AG04450 (cell line): ENCODE measurements at regions of chr11 and their contacts with region 1.

Region 1: GRCh38 chr11:19071255-19071654 is 10.7 kb upstream of the MRGPRX2 start:
- DNase-seq: peak; percentile 53
- H3K4me3 ChIP-seq: peak overlapping the region; percentile 41
- H3K27ac ChIP-seq: no peak overlapping the region
- H3K27me3 ChIP-seq: peaks cover 11% of the 10 kb centered on the region
- CTCF ChIP-seq: peak; percentile 97

Region 2: GRCh38 chr11:18878211-18878610 is 193.0 kb before region 1 on chr11:
- CTCF ChIA-PET with region 1: no interaction called
- POLR2A ChIA-PET with region 1: no interaction called
- DNase-seq: no peak
- H3K4me3 ChIP-seq: no peak overlapping the region
- H3K27ac ChIP-seq: no peak overlapping the region
- H3K27me3 ChIP-seq: no peaks in the 10 kb centered on the region
- CTCF ChIP-seq: no peak

Region 3: DNA sequence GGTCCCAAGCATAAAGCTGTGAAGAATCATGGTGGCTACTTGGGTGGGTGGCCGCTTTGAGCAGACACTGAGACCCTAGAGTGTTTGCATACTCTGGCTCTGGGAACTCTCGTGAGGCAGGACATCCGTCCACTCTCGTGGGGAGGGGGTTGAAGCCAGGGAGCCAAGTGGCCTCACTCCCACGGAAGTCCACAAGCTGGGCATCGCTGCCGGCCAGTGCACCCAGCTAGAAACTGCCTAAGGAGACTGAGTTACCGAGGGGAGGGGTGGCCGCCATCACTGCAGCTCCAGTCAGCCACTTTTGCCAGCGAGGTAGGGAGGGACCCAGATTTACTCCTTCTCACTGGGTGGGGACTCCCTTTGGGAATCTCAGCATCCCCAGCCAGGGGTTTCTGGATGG is 31.2 kb before region 1 on chr11:
- CTCF ChIA-PET with region 1: interaction called, 11 read pairs
- POLR2A ChIA-PET with region 1: no interaction called
- DNase-seq: no peak
- H3K4me3 ChIP-seq: no peak overlapping the region
- H3K27ac ChIP-seq: no peak overlapping the region
- H3K27me3 ChIP-seq: no peaks in the 10 kb centered on the region
- CTCF ChIP-seq: no peak

Region 4: GRCh38 chr11:19055016-19055415 is 16.2 kb before region 1 on chr11:
- CTCF ChIA-PET with region 1: interaction called, 39 read pairs
- POLR2A ChIA-PET with region 1: no interaction called
- DNase-seq: no peak
- H3K4me3 ChIP-seq: no peak overlapping the region
- H3K27ac ChIP-seq: no peak overlapping the region
- H3K27me3 ChIP-seq: peaks cover 8% of the 10 kb centered on the region
- CTCF ChIP-seq: no peak

Region 5: GRCh38 chr11:19060629-19061028 is 10.6 kb before region 1 on chr11 and contains the start of gene MRGPRX2:
- CTCF ChIA-PET with region 1: interaction called, 39 read pairs
- POLR2A ChIA-PET with region 1: no interaction called
- DNase-seq: no peak
- H3K4me3 ChIP-seq: no peak within 1 kb of the TSS
- H3K27ac ChIP-seq: no peak within 1 kb of the TSS
- H3K27me3 ChIP-seq: peaks cover 8% of the 10 kb centered on the region
- CTCF ChIP-seq: no peak
- polyA plus RNA-seq, gene MRGPRX2: not detected in 2 replicates

Region 6: GRCh38 chr11:19101796-19102520 is 30.7 kb after region 1 on chr11:
- CTCF ChIA-PET with region 1: interaction called, 13 read pairs
- POLR2A ChIA-PET with region 1: no interaction called
- DNase-seq: no peak
- H3K4me3 ChIP-seq: no peak overlapping the region
- H3K27ac ChIP-seq: no peak overlapping the region
- H3K27me3 ChIP-seq: peaks cover 4% of the 10 kb centered on the region
- CTCF ChIP-seq: no peak

Region 7: GRCh38 chr11:19168090-19168489 is 96.8 kb after region 1 on chr11:
- CTCF ChIA-PET with region 1: no interaction called
- POLR2A ChIA-PET with region 1: no interaction called
- DNase-seq: no peak
- H3K4me3 ChIP-seq: no peak overlapping the region
- H3K27ac ChIP-seq: no peak overlapping the region
- H3K27me3 ChIP-seq: no peaks in the 10 kb centered on the region
- CTCF ChIP-seq: no peak